Endothelial cell of umbilical vein (primary cell): ENCODE measurements at regions of chr11 and their contacts with region 1.

Region 1: DNA sequence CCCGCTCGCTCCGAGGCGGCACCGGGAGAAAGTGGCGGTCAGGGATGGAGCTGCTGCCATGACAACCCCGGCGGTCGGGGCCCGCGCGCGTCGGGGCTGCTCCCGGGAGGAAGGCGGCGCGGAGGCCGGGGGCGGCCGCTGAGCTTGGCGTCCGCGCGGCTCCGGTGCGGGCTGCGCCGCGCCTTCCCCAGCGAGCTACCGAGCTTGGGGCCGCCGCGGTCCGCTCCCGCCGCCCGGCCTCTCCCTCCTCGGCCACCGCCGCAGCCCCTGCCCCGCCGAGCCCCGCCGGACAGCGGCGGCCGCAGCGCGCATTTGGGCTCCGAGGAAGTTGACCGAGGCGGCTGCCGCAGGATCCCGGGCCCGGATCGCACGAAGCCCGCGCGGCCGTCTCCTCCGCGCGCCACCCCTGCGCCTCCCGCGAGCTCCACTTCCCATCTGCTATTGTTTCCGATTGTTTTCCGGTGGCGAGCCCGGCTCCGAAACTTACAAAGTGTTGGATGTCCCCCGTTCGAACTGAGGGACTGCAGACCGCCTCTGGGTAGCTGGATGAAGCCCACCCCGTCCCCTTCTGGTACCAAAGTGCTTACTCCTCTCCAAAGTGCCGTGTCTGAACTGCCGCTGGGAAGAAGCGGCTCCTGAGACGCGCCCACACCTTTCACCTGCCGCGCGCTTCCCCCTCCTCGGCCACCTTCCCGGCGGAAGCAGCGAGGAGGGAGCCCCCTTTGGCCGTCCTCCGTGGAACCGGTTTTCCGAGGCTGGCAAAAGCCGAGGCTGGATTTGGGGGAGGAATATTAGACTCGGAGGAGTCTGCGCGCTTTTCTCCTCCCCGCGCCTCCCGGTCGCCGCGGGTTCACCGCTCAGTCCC is 540.3 kb downstream of the NTM start:
- DNase-seq: peak; percentile 43
- H3K4me3 ChIP-seq: peak overlapping the region; percentile 49 to 76 (median 64)
- H3K27ac ChIP-seq: peak overlapping the region; percentile 19
- H3K4me1 ChIP-seq: peaks cover 5% of the 10 kb centered on the region
- H3K27me3 ChIP-seq: peaks cover 0 to 10% of the 10 kb centered on the region in 2 experiments
- CTCF ChIP-seq: no peak
- POLR2A ChIP-seq: no peak

Region 2: DNA sequence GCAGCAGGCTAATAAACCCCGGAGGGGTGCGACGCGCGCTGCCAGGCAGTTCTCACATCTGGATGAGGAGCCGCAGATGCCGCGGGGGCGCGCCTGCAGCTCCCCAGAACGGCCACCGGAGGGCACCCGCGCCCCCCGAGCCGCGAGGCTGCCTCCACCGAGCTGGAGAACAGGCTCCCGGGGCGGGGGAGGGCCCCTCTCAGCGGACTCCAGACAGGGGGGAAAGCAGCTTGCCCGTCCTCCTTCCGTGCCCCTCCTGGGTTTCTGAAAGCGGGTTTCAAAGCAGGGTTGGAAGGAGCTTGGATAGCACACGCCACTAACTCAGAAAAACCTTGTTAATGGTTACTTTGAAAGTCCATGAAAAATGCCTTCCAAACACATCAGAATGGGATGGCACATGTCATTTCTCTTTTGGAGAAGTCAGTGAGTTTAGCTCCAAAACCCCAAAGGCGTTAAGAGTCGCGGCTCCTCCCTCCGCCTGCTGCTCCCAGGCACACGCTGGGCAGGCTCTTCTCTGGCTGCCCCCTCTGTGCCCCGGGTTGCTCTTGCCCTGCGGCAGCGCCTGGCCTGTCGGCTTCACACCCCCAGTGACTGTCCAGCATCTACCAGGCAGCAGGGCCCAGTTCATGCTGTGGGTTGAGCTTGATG is 222.6 kb before region 1 on chr11:
- CTCF ChIA-PET with region 1: interaction called, 263 read pairs
- POLR2A ChIA-PET with region 1: no interaction called
- dilution Hi-C with region 1: no loop called
- intact Hi-C with region 1: no loop called
- DNase-seq: peak; percentile 54
- H3K4me3 ChIP-seq: no peak overlapping the region
- H3K27ac ChIP-seq: no peak overlapping the region
- H3K4me1 ChIP-seq: no peaks in the 10 kb centered on the region
- H3K27me3 ChIP-seq: peaks cover 0 to 2% of the 10 kb centered on the region in 2 experiments
- CTCF ChIP-seq: peak; percentile 90 to 95
- POLR2A ChIP-seq: no peak

Region 3: GRCh38 chr11:131815590-131815989 is 95.2 kb before region 1 on chr11:
- CTCF ChIA-PET with region 1: no interaction called
- POLR2A ChIA-PET with region 1: no interaction called
- dilution Hi-C with region 1: no loop called
- intact Hi-C with region 1: loop called (anchors 5 kb)
- DNase-seq: no peak
- H3K4me3 ChIP-seq: no peak overlapping the region
- H3K27ac ChIP-seq: no peak overlapping the region
- H3K4me1 ChIP-seq: peaks cover 11% of the 10 kb centered on the region
- H3K27me3 ChIP-seq: peaks cover 3 to 5% of the 10 kb centered on the region in 2 experiments
- CTCF ChIP-seq: no peak
- POLR2A ChIP-seq: no peak

Region 4: GRCh38 chr11:131889146-131889577 is 21.6 kb before region 1 on chr11:
- CTCF ChIA-PET with region 1: interaction called, 11 read pairs
- POLR2A ChIA-PET with region 1: no interaction called
- dilution Hi-C with region 1: no loop called
- intact Hi-C with region 1: no loop called
- DNase-seq: no peak
- H3K4me3 ChIP-seq: no peak overlapping the region
- H3K27ac ChIP-seq: peak overlapping the region; percentile 45
- H3K4me1 ChIP-seq: peaks cover 13% of the 10 kb centered on the region
- H3K27me3 ChIP-seq: peaks cover 0 to 2% of the 10 kb centered on the region in 2 experiments
- CTCF ChIP-seq: no peak
- POLR2A ChIP-seq: no peak

Region 5: DNA sequence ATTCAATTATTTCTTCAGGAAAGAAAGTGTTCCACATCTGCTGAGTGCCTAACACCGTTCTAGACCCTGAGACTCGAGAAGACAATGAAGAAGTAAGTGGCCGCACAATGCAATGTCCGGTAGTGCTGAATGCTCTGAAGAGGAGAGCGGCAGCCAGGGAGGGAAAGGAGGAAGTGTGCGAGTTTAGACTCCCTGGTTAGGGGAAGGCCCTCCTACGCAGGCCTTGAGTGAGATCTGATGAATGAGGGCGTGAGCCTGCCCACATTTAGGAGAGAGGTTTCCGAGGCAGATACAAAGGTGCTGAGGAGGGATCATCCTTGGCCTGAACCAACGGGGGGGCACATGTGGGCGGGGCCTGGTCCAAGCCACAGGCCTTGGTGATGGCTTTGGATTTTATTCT is 18.2 kb after region 1 on chr11:
- CTCF ChIA-PET with region 1: no interaction called
- POLR2A ChIA-PET with region 1: no interaction called
- dilution Hi-C with region 1: no loop called
- intact Hi-C with region 1: no loop called
- DNase-seq: no peak
- H3K4me3 ChIP-seq: no peak overlapping the region
- H3K27ac ChIP-seq: no peak overlapping the region
- H3K4me1 ChIP-seq: no peaks in the 10 kb centered on the region
- H3K27me3 ChIP-seq: no peaks in the 10 kb centered on the region
- CTCF ChIP-seq: no peak
- POLR2A ChIP-seq: no peak

Region 6: DNA sequence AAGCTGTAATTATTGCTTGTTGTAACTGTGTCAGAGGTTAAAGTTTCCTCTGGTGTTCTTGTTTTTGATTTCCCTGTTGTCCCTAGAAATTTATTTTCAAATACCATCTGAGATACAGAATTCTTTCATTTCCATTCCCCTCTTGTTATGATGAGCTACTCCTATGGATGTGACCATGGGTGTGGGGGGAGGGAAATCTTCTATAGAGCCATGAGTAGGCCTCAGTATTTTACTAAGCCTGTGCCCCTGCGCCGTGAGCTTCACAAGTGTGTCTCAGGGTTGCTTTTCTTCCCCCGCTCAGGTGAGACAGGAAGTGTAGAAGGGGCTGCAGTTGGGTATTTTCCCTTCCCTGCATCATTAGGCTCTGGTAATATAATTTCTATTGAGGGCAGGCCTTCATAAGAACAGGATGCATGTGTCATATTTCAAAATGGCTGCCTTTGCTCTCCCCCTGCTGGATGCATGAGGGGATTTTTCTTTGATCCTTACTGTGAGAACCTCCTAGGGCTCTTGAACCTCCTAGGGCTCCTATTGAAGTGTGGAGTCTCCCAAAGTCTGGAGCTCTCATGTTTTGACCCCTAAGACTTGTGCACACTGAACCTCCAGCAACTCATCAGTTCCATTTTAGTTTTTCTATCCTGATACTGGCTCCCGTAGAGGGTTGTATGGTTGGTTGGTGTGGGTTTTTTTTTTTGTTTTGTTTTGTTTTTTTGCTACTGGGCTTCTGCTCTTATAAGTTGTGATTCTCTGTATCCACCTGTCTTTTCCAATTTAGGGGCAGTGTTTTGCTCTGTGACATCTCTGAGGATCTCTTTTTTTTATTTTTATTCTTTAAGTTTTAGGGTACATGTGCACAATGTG is 117.9 kb after region 1 on chr11:
- CTCF ChIA-PET with region 1: interaction called, 6 read pairs
- POLR2A ChIA-PET with region 1: no interaction called
- dilution Hi-C with region 1: no loop called
- intact Hi-C with region 1: loop called (anchors 5 kb)
- DNase-seq: peak; percentile 74
- H3K4me3 ChIP-seq: no peak overlapping the region
- H3K27ac ChIP-seq: no peak overlapping the region
- H3K4me1 ChIP-seq: peaks cover 13% of the 10 kb centered on the region
- H3K27me3 ChIP-seq: no peaks in the 10 kb centered on the region
- CTCF ChIP-seq: peak; percentile 61 to 65
- POLR2A ChIP-seq: no peak

Region 7: DNA sequence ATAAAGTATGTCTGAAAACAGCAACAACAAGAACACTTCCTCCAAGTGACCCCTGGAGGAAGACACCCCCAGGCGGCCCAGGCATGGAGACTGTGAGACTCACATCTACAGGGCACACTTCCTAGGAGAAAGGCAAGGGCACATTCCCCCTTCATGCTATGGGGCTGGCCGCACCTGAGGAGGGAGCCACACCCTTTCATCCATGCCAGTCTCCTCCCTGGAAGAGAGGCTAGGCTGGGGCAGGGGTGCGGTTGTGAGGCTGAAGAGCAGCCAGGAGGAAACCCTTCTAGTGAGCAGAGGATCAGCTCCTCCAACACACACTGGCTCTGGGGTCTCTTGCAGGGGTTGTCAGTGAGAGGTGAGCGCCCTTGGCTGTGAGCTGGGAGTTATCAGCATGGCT is 138.4 kb after region 1 on chr11:
- CTCF ChIA-PET with region 1: no interaction called
- POLR2A ChIA-PET with region 1: no interaction called
- dilution Hi-C with region 1: no loop called
- intact Hi-C with region 1: no loop called
- DNase-seq: no peak
- H3K4me3 ChIP-seq: no peak overlapping the region
- H3K27ac ChIP-seq: no peak overlapping the region
- H3K4me1 ChIP-seq: no peaks in the 10 kb centered on the region
- H3K27me3 ChIP-seq: no peaks in the 10 kb centered on the region
- CTCF ChIP-seq: no peak
- POLR2A ChIP-seq: no peak

Region 8: DNA sequence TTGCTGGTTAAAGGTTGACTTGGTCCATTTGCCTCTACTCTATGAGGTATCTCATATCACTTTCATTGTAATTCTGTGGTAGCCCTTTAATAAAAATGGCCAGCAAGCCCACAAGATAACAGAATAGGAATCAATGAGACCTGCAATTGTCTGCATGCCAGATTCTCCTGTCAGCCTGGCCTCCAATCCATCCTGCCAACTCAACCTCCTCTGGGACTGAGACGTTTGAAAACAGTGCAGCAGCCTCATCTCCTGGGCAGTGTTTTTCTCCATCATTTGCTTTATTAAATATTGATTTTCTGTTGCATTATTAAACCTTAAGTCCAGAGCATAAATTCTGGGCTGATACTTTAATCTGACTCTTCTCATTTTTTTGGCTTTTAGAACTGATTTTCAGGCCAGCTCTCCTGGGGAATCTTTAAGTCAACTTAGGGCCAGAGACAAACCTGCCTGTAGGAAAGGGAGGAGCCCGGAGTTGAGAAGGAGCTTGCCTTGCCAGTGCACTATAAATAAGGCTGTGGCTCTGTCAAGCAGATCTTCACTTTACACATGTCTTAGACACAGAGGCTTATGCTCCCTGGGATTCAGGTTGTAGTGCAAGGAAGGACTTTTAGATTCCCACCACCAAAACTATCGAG is 257.7 kb after region 1 on chr11:
- CTCF ChIA-PET with region 1: no interaction called
- POLR2A ChIA-PET with region 1: no interaction called
- dilution Hi-C with region 1: no loop called
- intact Hi-C with region 1: no loop called
- DNase-seq: no peak
- H3K4me3 ChIP-seq: no peak overlapping the region
- H3K27ac ChIP-seq: no peak overlapping the region
- H3K4me1 ChIP-seq: no peaks in the 10 kb centered on the region
- H3K27me3 ChIP-seq: no peaks in the 10 kb centered on the region
- CTCF ChIP-seq: no peak
- POLR2A ChIP-seq: no peak

Region 9: DNA sequence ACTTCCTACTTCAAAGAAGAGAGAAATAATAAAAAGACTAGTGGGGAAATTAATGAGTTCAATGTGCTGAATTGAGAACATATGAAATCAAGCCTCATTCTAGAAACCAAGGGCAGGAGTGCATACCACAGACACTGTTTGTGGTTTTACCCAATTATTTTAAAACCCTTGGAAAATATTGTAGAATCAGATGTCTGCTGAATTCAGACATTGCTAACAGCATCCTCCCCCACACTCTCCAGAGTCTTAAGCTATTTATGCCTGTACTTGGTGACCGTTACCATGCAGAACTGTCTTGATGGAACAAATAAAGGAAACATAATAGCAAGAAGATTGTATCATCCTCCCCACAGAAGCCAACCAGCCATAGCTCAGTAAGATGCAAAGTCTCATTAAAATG is 309.7 kb after region 1 on chr11:
- CTCF ChIA-PET with region 1: no interaction called
- POLR2A ChIA-PET with region 1: no interaction called
- dilution Hi-C with region 1: no loop called
- intact Hi-C with region 1: no loop called
- DNase-seq: no peak
- H3K4me3 ChIP-seq: no peak overlapping the region
- H3K27ac ChIP-seq: no peak overlapping the region
- H3K4me1 ChIP-seq: no peaks in the 10 kb centered on the region
- H3K27me3 ChIP-seq: no peaks in the 10 kb centered on the region
- CTCF ChIP-seq: no peak
- POLR2A ChIP-seq: no peak

Region 10: GRCh38 chr11:132941024-132941646 is 1030.4 kb after region 1 on chr11:
- CTCF ChIA-PET with region 1: interaction called, 4 read pairs
- POLR2A ChIA-PET with region 1: no interaction called
- dilution Hi-C with region 1: no loop called
- intact Hi-C with region 1: loop called (anchors 5 kb)
- DNase-seq: peak; percentile 19
- H3K4me3 ChIP-seq: no peak overlapping the region
- H3K27ac ChIP-seq: no peak overlapping the region
- H3K4me1 ChIP-seq: no peaks in the 10 kb centered on the region
- H3K27me3 ChIP-seq: peaks cover 10 to 17% of the 10 kb centered on the region in 2 experiments
- CTCF ChIP-seq: peak; percentile 67 to 71
- POLR2A ChIP-seq: no peak

Region 11: GRCh38 chr11:133064152-133064877 is 1153.6 kb after region 1 on chr11:
- CTCF ChIA-PET with region 1: interaction called, 3 read pairs
- POLR2A ChIA-PET with region 1: no interaction called
- dilution Hi-C with region 1: no loop called
- intact Hi-C with region 1: loop called (anchors 1 kb)
- DNase-seq: peak; percentile 48
- H3K4me3 ChIP-seq: peak overlapping the region; percentile 14 to 64 (median 42)
- H3K27ac ChIP-seq: peak overlapping the region; percentile 12
- H3K4me1 ChIP-seq: peaks cover 8% of the 10 kb centered on the region
- H3K27me3 ChIP-seq: no peaks in the 10 kb centered on the region
- CTCF ChIP-seq: peak; percentile 63 to 68
- POLR2A ChIP-seq: no peak